Posterior cingulate gyrus (tissue), 11 donors: ENCODE measurements at regions of chr13 and their contacts with region 1.

Region 1: DNA sequence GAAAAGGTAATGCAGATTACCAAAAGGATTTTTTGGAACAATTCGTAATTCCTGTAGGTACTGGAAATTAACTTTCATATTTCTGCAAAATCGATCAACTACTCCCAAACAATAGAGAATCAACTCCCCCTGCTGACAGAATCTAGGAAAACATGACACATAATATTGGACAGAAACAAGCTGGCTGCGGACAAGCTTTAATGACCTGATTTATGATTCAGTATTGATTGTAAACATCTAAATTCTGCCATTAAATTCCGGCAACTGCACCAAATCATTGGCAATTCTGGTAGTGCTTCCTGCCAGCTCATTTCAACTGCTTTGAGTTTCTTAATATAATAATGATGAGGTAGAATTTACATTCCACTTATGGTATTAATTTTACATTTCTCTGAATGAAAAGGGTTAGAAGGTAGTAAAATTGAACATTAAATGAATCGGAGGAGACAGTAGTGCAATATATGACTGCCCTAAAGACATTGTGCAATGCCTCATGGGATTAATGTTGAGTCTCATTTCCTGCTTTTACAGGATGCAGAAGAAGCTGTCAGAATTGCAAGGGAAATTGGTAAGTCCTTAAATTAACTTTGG is 146.5 kb downstream of the PCCA start:
- DNase-seq: no peak

Region 2: DNA sequence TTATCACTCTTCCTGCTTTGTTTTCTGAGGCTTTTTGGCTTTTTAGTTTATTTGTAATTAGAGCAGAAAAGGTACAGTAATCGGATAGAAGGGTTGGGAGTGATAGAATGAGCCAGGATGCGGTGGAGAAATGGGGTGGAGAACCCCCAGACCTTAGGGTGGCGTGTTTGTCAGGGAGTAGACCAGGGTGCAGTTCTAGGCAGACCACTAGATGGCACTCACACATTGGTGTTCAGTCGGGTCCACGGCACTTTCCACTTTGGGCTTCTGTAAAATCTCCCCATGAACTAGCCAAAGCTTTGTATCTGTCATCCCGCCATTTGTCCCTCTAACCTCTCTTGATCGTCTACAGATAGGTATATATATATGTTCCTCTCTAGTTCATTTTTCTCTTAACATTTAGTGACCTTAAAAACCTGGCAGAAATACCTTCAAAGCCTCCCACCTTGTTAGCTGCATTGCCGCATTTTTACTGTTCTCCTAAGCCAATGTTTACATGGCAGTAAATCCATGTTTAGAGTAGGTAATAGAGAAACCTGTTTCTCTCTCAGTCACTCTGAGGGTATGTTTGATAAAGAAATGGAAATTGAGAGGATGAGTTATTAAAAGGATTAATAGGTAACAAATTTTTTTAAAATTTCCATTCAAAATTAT is 579.2 kb before region 1 on chr13:
- intact Hi-C with region 1: loop called (anchors 1 kb)
- DNase-seq: peak in 8 of 10 donors; percentile 58 to 95 (median 84)

Region 3: DNA sequence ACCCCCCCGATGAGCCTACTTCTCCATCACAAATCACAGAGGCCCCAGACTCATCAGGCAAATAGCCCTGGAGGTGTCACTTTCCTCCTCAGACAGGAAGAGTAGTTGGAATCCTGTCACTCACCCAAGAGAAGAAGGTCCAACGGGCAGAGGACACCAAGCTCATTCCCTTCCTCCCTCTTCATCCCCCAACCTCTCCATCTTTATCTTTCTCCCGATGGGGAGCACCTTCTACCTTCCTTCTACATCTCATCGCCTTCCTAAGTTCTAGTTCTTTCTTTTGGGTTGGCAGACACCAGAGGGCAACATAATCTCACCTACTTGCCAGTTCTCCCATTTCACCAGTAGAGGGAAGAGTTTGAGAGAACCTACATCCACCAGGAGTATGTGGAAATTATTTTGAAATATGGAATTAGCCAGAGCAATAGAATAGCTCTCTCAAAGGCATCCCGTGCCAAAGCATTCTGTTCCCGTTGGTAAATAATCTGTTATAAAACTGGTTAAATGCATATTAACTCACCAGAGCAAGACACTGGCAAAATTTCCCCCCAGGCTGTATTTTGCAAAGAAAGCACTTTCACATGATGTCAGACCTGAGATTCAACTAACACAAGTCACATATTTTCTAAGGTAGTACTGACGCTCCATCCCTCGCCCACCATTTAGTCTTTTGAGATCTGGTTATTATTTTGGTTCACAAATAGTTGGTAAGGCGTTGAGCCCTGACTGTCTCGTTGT is 318.9 kb before region 1 on chr13:
- intact Hi-C with region 1: loop called (anchors 2 kb)
- DNase-seq: no peak

Region 4: DNA sequence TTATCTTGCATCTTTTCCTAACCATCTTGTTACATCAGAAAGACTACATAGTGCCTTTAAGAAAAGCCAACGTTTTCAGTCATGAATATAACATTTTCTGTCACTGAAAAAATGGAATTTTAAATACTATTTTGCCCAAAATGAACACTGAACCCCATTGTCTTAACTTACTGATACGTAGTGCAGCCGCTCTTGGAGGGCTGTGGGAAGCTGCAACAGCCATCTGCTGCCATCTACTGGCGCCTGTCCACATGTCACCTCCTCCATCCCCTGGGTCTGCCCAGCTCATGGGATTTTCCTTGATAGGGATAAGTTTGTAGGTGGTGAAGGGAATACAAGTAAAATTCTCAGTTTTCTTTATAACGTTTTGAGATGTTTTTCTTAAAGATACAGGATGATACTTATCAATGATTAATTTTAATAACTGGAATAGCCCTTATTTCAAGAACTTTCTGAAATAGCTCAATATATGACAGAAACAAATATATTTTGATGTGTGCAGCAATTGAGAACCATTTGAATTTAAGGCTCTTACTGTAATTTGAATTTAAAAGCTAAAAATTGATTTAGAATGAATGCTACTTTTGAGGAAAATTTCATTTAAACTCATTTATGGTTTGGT is 279.5 kb after region 1 on chr13:
- intact Hi-C with region 1: loop called (anchors 10 kb)
- DNase-seq: peak; percentile 66 to 97 (median 88)